HCT116 (cell line): ENCODE measurements at regions of chr3 and their contacts with region 1.

Region 1: DNA sequence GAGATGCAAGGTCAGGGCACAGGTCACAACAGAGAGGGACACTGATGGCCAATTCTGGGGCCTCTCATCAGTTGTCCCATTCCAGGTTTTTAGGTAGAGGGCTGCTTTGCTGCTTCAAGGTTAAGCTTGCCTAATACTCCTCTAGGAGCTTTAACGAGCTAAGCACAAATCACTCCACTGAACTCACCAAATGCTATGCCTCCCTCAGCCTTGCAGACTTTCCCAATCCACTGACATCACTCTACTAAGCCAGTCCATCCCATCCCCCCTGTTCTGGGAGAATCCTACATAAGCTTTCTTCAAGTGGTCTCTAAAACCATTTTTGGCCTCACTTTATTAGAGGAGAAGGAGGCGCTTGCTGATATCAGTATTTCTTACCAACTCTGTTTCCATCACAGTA is 24.8 kb upstream of the PDCD6IP start:
- DNase-seq: no peak
- ATAC-seq: no peak
- H3K4me3 ChIP-seq: no peak overlapping the region
- H3K27ac ChIP-seq: no peak overlapping the region
- H3K4me1 ChIP-seq: no peaks in the 10 kb centered on the region
- H3K27me3 ChIP-seq: no peaks in the 10 kb centered on the region
- CTCF ChIP-seq: no peak
- POLR2A ChIP-seq: no peak
- RAD21 ChIP-seq: no peak

Region 2: GRCh38 chr3:32947789-32948238 is 825.8 kb before region 1 on chr3:
- CTCF ChIA-PET with region 1: interaction called, 3 read pairs
- POLR2A ChIA-PET with region 1: no interaction called
- RAD21 ChIA-PET with region 1: no interaction called
- intact Hi-C with region 1: loop called (anchors 1 kb)
- DNase-seq: peak; percentile 88
- ATAC-seq: peak; percentile 97
- H3K4me3 ChIP-seq: no peak overlapping the region
- H3K27ac ChIP-seq: no peak overlapping the region
- H3K4me1 ChIP-seq: peaks cover 0 to 14% of the 10 kb centered on the region in 2 experiments; a peak in 2 of 4 replicates
- H3K27me3 ChIP-seq: no peaks in the 10 kb centered on the region
- CTCF ChIP-seq: peak; percentile 79 to 88 (median 83)
- POLR2A ChIP-seq: no peak
- RAD21 ChIP-seq: peak; percentile 96

Region 3: DNA sequence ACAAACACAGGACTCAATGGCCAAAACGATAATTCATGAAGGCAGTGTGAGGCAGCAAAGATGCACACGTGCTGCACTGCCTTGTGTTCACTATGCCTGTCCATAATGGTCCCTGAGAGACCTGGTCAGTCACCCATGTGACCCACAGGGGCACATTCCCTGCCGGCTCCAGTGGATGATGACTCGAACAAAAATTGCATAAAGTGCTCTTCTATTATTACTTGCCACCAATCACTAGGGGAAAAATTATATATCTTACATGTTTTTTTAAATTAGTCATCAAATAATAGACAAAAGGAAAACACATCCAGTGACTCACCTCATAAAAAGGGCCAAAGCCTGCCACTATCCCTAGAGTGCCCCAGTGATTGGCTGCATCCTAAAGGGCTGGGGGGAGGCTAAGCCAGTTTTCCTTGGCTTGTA is 380.9 kb before region 1 on chr3:
- CTCF ChIA-PET with region 1: no interaction called
- POLR2A ChIA-PET with region 1: no interaction called
- RAD21 ChIA-PET with region 1: no interaction called
- intact Hi-C with region 1: loop called (anchors 10 kb)
- DNase-seq: peak; percentile 53
- ATAC-seq: peak; percentile 95
- H3K4me3 ChIP-seq: no peak overlapping the region
- H3K27ac ChIP-seq: peak overlapping the region; percentile 40
- H3K4me1 ChIP-seq: peaks cover 19 to 20% of the 10 kb centered on the region in 2 experiments
- H3K27me3 ChIP-seq: no peaks in the 10 kb centered on the region
- CTCF ChIP-seq: no peak
- POLR2A ChIP-seq: no peak
- RAD21 ChIP-seq: no peak

Region 4: DNA sequence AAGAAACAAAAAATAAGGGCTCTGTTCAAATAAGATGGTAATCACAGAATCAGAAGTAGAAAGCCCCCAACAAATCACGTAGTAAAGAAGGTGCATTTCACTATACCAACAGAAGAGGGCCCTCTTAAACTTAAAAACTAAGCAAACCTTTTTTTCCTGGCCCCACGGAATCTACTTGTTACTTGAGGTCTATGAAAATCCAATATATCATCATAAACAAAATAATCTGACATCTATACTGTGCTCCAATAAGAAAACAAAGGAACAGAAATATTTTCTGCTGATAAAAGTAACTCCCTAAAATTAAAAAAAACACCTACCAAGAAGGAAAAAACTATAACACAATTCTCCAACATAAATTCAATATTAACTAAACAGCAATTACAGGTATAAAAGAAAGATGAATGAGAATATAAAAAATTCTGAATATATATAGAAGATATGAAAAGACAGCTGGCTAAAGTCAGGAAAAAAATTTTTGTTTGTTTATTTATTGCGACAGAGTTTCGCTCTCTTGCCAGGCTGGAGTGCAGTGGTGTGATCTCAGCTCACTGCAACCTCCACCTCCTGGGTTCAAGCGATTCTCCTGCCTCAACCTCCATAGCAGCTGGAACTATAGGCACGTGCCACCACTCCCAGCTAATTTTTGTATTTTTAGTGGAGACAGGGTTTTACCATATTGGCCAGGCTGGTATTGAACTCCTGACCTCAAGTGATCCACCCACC is 137.3 kb before region 1 on chr3:
- CTCF ChIA-PET with region 1: interaction called, 13 read pairs
- POLR2A ChIA-PET with region 1: no interaction called
- RAD21 ChIA-PET with region 1: interaction called in 1 of 2 experiments, 3 read pairs
- intact Hi-C with region 1: loop called (anchors 1 kb)
- DNase-seq: peak; percentile 44
- ATAC-seq: peak; percentile 61
- H3K4me3 ChIP-seq: no peak overlapping the region
- H3K27ac ChIP-seq: no peak overlapping the region
- H3K4me1 ChIP-seq: no peaks in the 10 kb centered on the region
- H3K27me3 ChIP-seq: no peaks in the 10 kb centered on the region
- CTCF ChIP-seq: peak; percentile 49 to 71 (median 50); a peak in 5 of 6 replicates
- POLR2A ChIP-seq: no peak
- RAD21 ChIP-seq: peak; percentile 76